ENCODE measurements at regions of chr11 and their contacts with region 1.

Region 1: GRCh38 chr11:59615637-59616395 is at the start of gene OSBP:
- DNase-seq: peak; percentile 99
- H3K4me3 ChIP-seq: peak within 1 kb of the TSS; percentile 98
- H3K27ac ChIP-seq: peak within 1 kb of the TSS; percentile 43
- H3K4me1 ChIP-seq: peaks cover 38% of the 10 kb centered on the region
- CTCF ChIP-seq: no peak
- total RNA-seq, gene OSBP: 16.9 and 19.2 TPM in 2 replicates

Region 2: GRCh38 chr11:59550368-59550841 is 65.4 kb before region 1 on chr11:
- CTCF ChIA-PET with region 1: no interaction called
- POLR2A ChIA-PET with region 1: interaction called, 4 read pairs
- intact Hi-C with region 1: loop called (anchors 1 kb)
- DNase-seq: peak; percentile 95
- H3K4me3 ChIP-seq: peak overlapping the region; percentile 72
- H3K27ac ChIP-seq: peak overlapping the region; percentile 91
- H3K4me1 ChIP-seq: peaks cover 24% of the 10 kb centered on the region
- CTCF ChIP-seq: peak; percentile 65

Region 3: GRCh38 chr11:59574932-59575502 is 40.8 kb before region 1 on chr11:
- CTCF ChIA-PET with region 1: no interaction called
- POLR2A ChIA-PET with region 1: interaction called, 3 read pairs
- intact Hi-C with region 1: loop called (anchors 5 kb)
- DNase-seq: no peak
- H3K4me3 ChIP-seq: no peak overlapping the region
- H3K27ac ChIP-seq: no peak overlapping the region
- H3K4me1 ChIP-seq: no peaks in the 10 kb centered on the region
- CTCF ChIP-seq: no peak

Region 4: DNA sequence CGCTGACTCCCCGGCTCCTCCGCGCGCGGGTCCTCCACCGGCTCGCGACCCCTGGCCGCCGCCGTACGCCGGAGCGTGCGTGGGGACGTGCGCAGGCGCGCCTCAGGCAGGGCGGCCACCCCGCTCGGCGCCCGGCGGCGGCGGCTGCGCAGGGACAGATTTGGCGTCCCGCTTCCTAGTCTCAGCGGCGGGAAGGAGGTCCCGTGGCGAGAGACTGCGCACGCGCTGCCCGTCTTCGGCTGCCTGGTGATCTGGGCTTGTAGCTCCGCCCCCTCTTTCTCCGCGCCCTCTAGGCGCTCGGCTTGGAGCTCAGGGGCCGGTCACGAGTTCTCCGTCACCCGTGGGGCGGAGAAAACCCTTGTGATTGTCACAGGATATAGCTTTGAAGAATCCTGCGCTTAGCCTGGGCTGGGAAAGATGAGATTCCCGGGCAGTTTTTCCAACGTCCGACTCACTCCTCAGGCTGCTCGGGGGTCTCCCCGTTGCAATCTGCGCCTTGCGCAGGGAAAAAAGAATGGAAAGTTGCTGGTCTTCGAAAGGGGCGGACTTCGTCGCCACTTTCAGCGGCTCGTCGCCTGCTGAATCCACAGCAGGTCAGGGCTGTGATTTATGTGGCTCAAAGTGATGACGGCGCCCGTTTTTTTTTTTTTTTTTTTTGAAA is 53.3 kb after region 1 on chr11 and contains the start of gene PATL1:
- CTCF ChIA-PET with region 1: interaction called, 3 read pairs
- POLR2A ChIA-PET with region 1: interaction called, 13 read pairs
- intact Hi-C with region 1: loop called (anchors 2 kb)
- DNase-seq: peak; percentile 98
- H3K4me3 ChIP-seq: peak within 1 kb of the TSS; percentile 99
- H3K27ac ChIP-seq: peak within 1 kb of the TSS; percentile 47
- H3K4me1 ChIP-seq: peaks cover 19% of the 10 kb centered on the region
- CTCF ChIP-seq: no peak
- total RNA-seq, gene PATL1: 14.7 and 15.2 TPM in 2 replicates

Region 5: GRCh38 chr11:59689015-59689414 is 73.2 kb after region 1 on chr11:
- CTCF ChIA-PET with region 1: no interaction called
- POLR2A ChIA-PET with region 1: no interaction called
- intact Hi-C with region 1: no loop called
- DNase-seq: no peak
- H3K4me3 ChIP-seq: no peak overlapping the region
- H3K27ac ChIP-seq: no peak overlapping the region
- H3K4me1 ChIP-seq: no peaks in the 10 kb centered on the region
- CTCF ChIP-seq: no peak